PC-3 (cell line): ENCODE measurements at regions of chr18 and their contacts with region 1.

Region 1: GRCh38 chr18:22169007-22169864 is at the start of gene GATA6:
- DNase-seq: peak; percentile 91
- ATAC-seq: peak; percentile 79
- H3K4me3 ChIP-seq: peak within 1 kb of the TSS; percentile 100
- H3K27ac ChIP-seq: peak within 1 kb of the TSS; percentile 80
- H3K4me1 ChIP-seq: peaks cover 13% of the 10 kb centered on the region
- H3K27me3 ChIP-seq: peaks cover 6% of the 10 kb centered on the region
- CTCF ChIP-seq: peak; percentile 55; the same call in 1 of the 2 replicates
- total RNA-seq, gene GATA6: 19.4 and 24.1 TPM in 2 replicates

Region 2: DNA sequence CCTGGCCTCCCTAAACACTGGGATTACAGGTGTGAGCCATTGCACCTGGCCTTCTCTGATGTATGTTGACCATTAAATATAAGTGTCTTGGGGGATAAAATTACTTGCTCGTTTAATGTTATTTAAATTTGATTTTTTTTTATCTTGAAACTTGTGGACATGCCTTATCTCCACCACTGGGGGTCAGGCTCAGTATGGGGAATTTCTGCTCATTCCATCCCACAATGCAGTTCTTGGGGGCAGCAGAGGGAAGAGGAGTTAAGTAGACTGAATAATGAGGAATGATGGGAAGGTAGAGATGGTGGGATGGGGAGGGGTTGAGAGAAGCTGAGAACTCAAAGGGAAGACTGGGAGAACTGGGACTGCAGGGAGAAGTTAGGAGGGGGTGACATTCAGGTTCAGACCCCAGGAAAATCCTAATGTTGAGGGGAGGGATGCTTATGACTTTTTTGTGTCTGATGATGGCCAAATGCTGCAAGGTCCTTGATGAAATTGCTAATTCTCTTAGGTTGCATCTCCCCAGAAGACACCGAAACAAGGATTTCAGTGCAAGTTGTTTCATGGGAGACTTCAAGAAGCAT is 254.4 kb before region 1 on chr18:
- CTCF ChIA-PET with region 1: no interaction called
- POLR2A ChIA-PET with region 1: no interaction called
- intact Hi-C with region 1: loop called (anchors 5 kb)
- DNase-seq: peak; percentile 67
- ATAC-seq: peak; percentile 67
- H3K4me3 ChIP-seq: no peak overlapping the region
- H3K27ac ChIP-seq: no peak overlapping the region
- H3K4me1 ChIP-seq: no peaks in the 10 kb centered on the region
- H3K27me3 ChIP-seq: no peaks in the 10 kb centered on the region
- CTCF ChIP-seq: peak; percentile 87

Region 3: DNA sequence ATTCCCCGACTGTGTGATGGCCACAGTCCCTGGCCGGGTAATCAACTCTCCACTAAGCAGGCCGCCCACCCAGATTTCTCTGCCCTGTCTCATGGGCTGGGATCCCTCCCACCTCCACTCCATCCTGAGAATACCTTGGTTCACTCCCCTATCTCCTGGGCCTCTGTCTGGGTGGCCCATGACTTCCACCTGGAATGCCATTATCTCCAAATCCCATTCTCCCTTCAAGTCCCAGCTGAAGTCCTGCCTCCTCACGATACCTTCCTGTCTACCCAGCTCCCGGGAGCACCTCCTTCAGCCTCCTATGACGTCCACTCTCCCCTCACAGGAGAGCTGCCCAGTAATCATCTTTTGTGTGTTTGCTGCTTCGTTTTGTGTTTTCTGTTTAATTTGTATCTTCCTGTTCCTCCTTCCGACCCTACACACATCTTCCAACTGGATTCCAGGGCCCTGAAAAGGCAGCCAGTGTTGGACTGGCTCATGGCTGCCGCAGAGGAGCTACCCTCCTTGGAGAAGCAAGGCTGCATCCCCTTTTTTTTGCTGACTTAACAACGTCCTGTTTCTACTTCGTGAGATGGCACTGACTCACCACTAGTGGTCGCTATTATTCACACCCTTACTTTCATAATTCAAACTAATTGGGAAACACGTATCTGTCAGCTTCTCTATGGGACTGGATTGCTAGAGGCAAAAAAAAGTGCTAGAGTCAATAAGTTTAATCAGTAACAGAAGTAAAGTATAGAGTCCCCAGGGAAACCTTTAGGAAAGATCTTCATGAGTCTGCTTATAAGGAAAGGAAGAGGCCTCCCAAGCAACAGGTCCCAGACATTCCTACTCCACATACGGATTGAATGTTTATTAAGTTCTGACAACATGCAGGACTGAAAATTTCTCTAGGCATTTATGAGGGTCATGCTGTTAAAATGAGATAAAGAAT is 171.8 kb before region 1 on chr18:
- CTCF ChIA-PET with region 1: no interaction called
- POLR2A ChIA-PET with region 1: no interaction called
- intact Hi-C with region 1: loop called (anchors 2 kb)
- DNase-seq: peak; percentile 50
- ATAC-seq: peak; percentile 67
- H3K4me3 ChIP-seq: no peak overlapping the region
- H3K27ac ChIP-seq: no peak overlapping the region
- H3K4me1 ChIP-seq: no peaks in the 10 kb centered on the region
- H3K27me3 ChIP-seq: no peaks in the 10 kb centered on the region
- CTCF ChIP-seq: peak; percentile 92

Region 4: DNA sequence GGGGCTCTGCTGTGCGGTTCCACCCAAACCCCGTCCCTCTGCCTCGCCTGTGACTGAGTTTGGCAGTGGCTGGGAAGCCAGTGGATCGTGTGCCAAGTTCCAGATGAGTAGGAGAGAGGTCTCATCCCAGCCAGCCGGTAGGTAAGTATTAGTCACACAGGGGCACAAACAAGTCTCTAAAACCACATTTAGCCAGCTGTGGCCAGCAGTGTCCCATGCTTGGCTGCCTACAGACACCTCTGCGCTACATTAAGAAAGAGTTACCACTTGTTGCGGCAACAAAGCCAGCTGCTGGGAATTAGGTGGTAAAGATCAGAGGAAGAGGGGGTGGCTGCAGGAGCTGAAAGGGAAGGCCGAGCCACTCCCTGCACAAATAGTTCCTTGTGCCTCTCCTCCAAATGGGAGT is 81.4 kb after region 1 on chr18:
- CTCF ChIA-PET with region 1: no interaction called
- POLR2A ChIA-PET with region 1: interaction called, 29 read pairs
- intact Hi-C with region 1: no loop called
- DNase-seq: peak; percentile 92
- ATAC-seq: peak; percentile 100
- H3K4me3 ChIP-seq: no peak overlapping the region
- H3K27ac ChIP-seq: peak overlapping the region; percentile 49
- H3K4me1 ChIP-seq: peaks cover 16% of the 10 kb centered on the region
- H3K27me3 ChIP-seq: no peaks in the 10 kb centered on the region
- CTCF ChIP-seq: no peak; the same call in 1 of the 2 replicates

Region 5: GRCh38 chr18:22348521-22349316 is 179.5 kb after region 1 on chr18:
- CTCF ChIA-PET with region 1: no interaction called
- POLR2A ChIA-PET with region 1: no interaction called
- intact Hi-C with region 1: loop called (anchors 5 kb)
- DNase-seq: peak; percentile 77
- ATAC-seq: peak; percentile 70
- H3K4me3 ChIP-seq: peak overlapping the region; percentile 65
- H3K27ac ChIP-seq: peak overlapping the region; percentile 62
- H3K4me1 ChIP-seq: peaks cover 67% of the 10 kb centered on the region
- H3K27me3 ChIP-seq: no peaks in the 10 kb centered on the region
- CTCF ChIP-seq: no peak